Activated T-helper 2 cell treated with anti-CD3 and anti-CD28 coated beads, Interferon-gamma antibody, Interleukin-2, Interleukin-4, amounts not matched to agents 10 μg/mL and 5 μg/mL and 100 μg/mL, durations not matched to agents 14 hours and 24 hours and 36 hours (primary cell): ENCODE measurements at regions of chr11 and their contacts with region 1.

Region 1: DNA sequence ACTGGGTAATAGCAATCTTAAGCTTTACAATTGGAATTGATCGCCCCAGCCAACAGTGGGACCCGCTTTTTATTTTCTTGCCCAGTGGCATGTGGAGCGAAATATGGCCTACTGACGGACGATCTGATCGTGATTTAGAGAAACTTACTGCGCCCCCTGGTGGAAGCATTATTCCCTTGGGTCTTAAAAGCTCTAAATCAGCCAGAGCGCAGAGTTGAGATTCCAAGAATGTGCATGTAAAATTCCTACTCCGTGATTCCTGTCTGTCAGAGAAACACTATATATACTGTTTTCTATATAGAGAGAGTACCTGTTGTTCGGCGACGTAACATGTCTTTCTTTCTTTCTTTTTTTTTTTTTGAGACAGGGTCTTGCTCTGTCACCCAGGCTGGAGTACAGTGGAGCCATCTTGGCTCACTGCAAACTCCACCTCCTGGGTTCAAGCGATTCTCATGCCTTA is 3.7 kb upstream of the DPF2 start:
- DNase-seq: peak; percentile 69
- H3K4me3 Mint-ChIP-seq: no peak overlapping the region
- H3K27ac Mint-ChIP-seq: no peak overlapping the region
- H3K4me1 Mint-ChIP-seq: peaks cover 10% of the 10 kb centered on the region
- H3K27me3 Mint-ChIP-seq: no peaks in the 10 kb centered on the region

Region 2: GRCh38 chr11:65354265-65355012 is 24.5 kb after region 1 on chr11 and contains the start of gene TIGD3:
- intact Hi-C with region 1: loop called (anchors 2 kb)
- DNase-seq: peak; percentile 94
- H3K4me3 Mint-ChIP-seq: peak within 1 kb of the TSS; percentile 87
- H3K27ac Mint-ChIP-seq: peak within 1 kb of the TSS; percentile 80
- H3K4me1 Mint-ChIP-seq: peaks cover 13% of the 10 kb centered on the region
- H3K27me3 Mint-ChIP-seq: peaks cover 11% of the 10 kb centered on the region
- total RNA-seq, gene TIGD3: 1.3 and 1.6 TPM in 2 replicates